Activated T-helper 1 cell treated with anti-CD3 and anti-CD28 coated beads, Interleukin-12 subunit alpha, Interleukin-12 subunit beta, Interleukin-2, Interleukin-4 antibody, amounts not matched to agents 30 ng/mL and 10 ng/mL and 1 ng/mL, durations not matched to agents 14 hours and 24 hours and 36 hours (primary cell): ENCODE measurements at regions of chr18 and their contacts with region 1.

Region 1: DNA sequence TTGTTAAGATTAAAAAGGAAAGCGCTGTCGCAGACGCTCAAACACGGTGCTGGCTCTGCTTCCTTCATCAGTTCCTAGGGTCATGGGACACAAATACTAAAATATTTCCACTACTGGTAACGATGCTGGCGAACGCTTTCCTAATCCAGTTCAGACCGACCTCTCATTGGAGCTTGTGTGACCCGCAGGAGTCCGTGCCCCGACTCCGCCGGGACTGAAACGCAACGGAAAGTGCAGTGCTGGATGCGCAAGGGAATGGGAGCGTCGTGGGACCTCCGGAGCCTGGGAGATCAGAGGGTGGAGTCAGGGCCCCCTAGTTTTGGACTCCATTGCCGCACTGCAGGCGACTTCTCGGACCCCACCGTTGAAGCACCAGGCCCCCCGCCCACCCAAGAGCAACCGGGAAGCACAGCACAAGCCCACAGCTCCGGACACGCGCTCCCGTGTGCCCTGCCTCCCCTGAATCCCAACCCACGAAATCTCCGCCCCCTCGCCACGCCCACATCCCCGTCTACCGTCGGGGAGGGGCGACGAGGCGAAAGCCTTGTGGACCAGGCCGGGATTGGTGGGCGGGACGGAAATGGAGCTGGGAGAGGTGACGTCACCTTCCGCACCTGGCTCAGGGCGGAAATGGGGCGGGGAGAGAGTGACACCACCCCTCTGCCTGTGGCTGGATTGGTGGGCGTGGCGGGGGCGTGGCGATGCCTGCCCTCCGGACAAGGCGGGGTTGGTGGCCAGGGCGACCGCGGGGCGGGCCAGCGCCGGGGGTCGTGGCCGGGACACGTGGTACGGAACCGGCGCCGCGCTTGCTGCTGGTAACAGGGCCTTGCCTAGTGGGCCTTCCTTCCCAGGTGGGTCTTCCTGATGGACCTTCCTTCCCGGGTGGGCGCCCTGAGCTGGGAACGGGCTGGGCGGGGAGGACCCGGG is at the start of gene CNDP2:
- DNase-seq: peak; percentile 99
- H3K4me3 Mint-ChIP-seq: peak within 1 kb of the TSS; percentile 88
- H3K27ac Mint-ChIP-seq: peak within 1 kb of the TSS; percentile 98
- H3K4me1 Mint-ChIP-seq: peaks cover 49% of the 10 kb centered on the region
- H3K27me3 Mint-ChIP-seq: peaks cover 9% of the 10 kb centered on the region
- total RNA-seq, gene CNDP2: 159 and 164 TPM in 2 replicates

Region 2: GRCh38 chr18:74040459-74041332 is 455.1 kb before region 1 on chr18:
- intact Hi-C with region 1: loop called (anchors 1 kb)
- DNase-seq: peak; percentile 62
- H3K4me3 Mint-ChIP-seq: no peak overlapping the region
- H3K27ac Mint-ChIP-seq: no peak overlapping the region
- H3K4me1 Mint-ChIP-seq: no peaks in the 10 kb centered on the region
- H3K27me3 Mint-ChIP-seq: no peaks in the 10 kb centered on the region

Region 3: DNA sequence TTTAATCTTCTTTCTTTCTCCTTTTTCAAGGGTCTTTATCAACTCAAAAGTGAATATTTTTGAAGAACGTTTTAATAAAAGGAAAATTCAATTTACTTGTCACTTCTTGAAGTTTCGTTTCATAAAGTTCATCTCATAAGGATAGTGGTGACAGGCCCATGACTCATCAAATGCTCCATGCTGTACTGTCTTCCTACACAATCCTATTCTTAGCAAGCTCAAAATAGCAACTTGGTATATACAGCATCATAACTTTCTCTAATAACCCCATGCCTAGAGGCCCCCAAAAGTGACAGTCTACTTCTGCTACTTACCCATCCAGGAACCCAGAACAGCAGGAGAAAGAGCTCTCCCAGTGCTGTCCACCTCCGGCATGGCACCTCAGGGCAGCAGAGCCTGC is 356.0 kb before region 1 on chr18:
- intact Hi-C with region 1: loop called (anchors 2 kb)
- DNase-seq: no peak
- H3K4me3 Mint-ChIP-seq: peak overlapping the region; percentile 59
- H3K27ac Mint-ChIP-seq: peak overlapping the region; percentile 93
- H3K4me1 Mint-ChIP-seq: peaks cover 44% of the 10 kb centered on the region
- H3K27me3 Mint-ChIP-seq: peaks cover 5% of the 10 kb centered on the region

Region 4: GRCh38 chr18:74291771-74292540 is 203.9 kb before region 1 on chr18 and contains the start of gene CYB5A:
- intact Hi-C with region 1: loop called (anchors 1 kb)
- DNase-seq: peak; percentile 97
- H3K4me3 Mint-ChIP-seq: no peak within 1 kb of the TSS
- H3K27ac Mint-ChIP-seq: peak within 1 kb of the TSS; percentile 90
- H3K4me1 Mint-ChIP-seq: peaks cover 14% of the 10 kb centered on the region
- H3K27me3 Mint-ChIP-seq: peaks cover 17% of the 10 kb centered on the region
- total RNA-seq, gene CYB5A: 36.0 and 40.5 TPM in 2 replicates

Region 5: GRCh38 chr18:74454279-74454751 is 41.5 kb before region 1 on chr18:
- intact Hi-C with region 1: loop called (anchors 2 kb)
- DNase-seq: no peak
- H3K4me3 Mint-ChIP-seq: no peak overlapping the region
- H3K27ac Mint-ChIP-seq: no peak overlapping the region
- H3K4me1 Mint-ChIP-seq: no peaks in the 10 kb centered on the region
- H3K27me3 Mint-ChIP-seq: peaks cover 47% of the 10 kb centered on the region

Region 6: DNA sequence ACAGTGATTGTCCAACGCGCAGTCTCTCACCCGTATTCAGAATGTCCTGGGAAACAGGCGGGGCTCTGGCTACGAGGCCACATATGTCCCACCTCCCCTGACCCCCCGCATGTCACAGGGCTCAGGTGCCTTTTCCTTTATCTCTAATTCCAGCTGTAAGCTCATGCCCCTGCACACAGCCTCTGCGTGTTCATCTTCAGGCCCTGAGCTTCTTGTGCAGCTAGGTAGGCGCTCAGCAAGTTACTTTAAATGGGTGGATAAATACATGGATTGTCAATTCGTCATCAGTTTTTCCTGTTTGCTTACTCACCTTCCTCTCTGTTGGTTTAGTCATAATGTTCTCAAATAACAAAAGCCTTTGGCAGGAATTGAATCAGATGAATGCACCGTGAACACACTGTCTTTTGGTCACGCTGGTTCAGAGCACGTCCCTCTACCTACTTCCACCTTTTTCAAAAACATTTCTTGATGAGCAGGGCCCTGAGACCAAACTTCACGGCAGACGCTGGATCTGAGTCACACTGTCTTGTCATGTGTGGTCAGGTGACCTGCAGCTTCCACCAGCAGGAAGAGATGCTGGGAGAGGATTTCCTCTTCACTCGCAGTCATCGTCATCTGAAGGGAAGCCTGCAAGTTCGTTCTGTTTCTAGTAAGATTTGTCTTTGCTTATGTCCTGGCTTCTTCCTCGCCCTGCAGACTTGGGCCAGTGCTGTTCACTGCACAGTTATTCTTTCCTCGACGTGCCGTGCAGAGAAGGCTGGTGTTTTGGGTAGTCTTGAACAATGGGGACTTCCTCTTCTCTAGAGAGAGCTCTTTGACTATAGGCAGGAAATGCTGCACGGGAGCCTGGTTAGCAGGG is 575.0 kb after region 1 on chr18:
- intact Hi-C with region 1: loop called (anchors 2 kb)
- DNase-seq: peak; percentile 70
- H3K4me3 Mint-ChIP-seq: peak overlapping the region; percentile 78
- H3K27ac Mint-ChIP-seq: peak overlapping the region; percentile 96
- H3K4me1 Mint-ChIP-seq: peaks cover 31% of the 10 kb centered on the region
- H3K27me3 Mint-ChIP-seq: no peaks in the 10 kb centered on the region